Naive thymus-derived CD4-positive, alpha-beta T cell (primary cell): ENCODE measurements at regions of chr22 and their contacts with region 1.

Region 1: GRCh38 chr22:31107178-31107893 is at the start of gene SELENOM:
- DNase-seq: peak; percentile 73 to 89 (median 84)
- ATAC-seq: peak; percentile 98
- H3K4me3 ChIP-seq: peak within 1 kb of the TSS; percentile 94
- H3K4me3 Mint-ChIP-seq: peak within 1 kb of the TSS; percentile 88 to 98 (median 93)
- H3K27ac ChIP-seq: peak within 1 kb of the TSS; percentile 86
- H3K27ac Mint-ChIP-seq: peak within 1 kb of the TSS; percentile 81 to 96 (median 90)
- H3K4me1 ChIP-seq: peaks cover 8 to 16% of the 10 kb centered on the region in 2 donors
- H3K4me1 Mint-ChIP-seq: peaks cover 12 to 26% (median 20%) of the 10 kb centered on the region in 7 donors
- H3K27me3 ChIP-seq: no peaks in the 10 kb centered on the region
- H3K27me3 Mint-ChIP-seq: peaks cover 0 to 3% (median 0%) of the 10 kb centered on the region in 5 donors
- total RNA-seq, gene SELENOM: 9.1 to 71.5 (median 68.6) TPM

Region 2: DNA sequence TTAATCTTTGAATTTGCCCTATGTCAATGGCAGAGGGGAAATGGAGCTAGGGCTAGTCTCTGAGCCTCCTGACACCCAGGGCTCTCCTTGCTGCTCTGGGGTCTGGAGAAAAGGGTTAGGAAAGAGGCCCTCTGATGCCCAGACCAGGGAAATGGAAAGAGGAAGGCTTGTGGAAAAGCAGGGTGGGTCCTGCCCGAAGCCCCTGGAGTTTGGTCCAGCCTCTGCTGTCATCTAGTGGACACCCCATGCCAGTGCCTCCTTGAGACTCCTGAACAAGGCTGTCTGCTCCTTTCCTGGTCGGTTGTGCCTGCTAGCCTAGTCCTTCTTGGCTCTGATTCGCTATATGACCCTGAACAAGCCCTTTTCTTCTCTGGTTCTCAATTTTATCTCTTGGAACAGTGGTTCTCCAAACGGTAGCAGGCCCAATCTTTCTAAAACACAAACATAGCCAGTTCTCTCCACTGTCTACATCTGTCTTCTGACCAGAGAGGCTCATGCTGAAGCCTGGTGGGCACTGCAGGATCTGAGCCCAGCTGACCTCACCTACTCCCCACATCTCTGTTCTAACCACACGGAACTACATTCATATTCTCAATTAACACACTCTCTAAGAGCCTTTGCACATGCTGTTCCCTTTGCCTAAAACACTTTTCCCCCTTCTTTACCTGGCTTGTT is 41.8 kb after region 1 on chr22:
- CTCF ChIA-PET with region 1: no interaction called
- POLR2A ChIA-PET with region 1: no interaction called
- intact Hi-C with region 1: loop called in 1 of 2 experiments (anchors 5 kb)
- DNase-seq: peak in 6 of 9 donors; percentile 4 to 30 (median 20)
- ATAC-seq: peak; percentile 61
- H3K4me3 ChIP-seq: no peak overlapping the region
- H3K4me3 Mint-ChIP-seq: no peak overlapping the region
- H3K27ac ChIP-seq: no peak overlapping the region
- H3K27ac Mint-ChIP-seq: no peak overlapping the region
- H3K4me1 ChIP-seq: no peaks in the 10 kb centered on the region
- H3K4me1 Mint-ChIP-seq: peaks cover 0 to 7% (median 0%) of the 10 kb centered on the region in 7 donors
- H3K27me3 ChIP-seq: no peaks in the 10 kb centered on the region
- H3K27me3 Mint-ChIP-seq: peaks cover 0 to 13% (median 4%) of the 10 kb centered on the region in 5 donors

Region 3: DNA sequence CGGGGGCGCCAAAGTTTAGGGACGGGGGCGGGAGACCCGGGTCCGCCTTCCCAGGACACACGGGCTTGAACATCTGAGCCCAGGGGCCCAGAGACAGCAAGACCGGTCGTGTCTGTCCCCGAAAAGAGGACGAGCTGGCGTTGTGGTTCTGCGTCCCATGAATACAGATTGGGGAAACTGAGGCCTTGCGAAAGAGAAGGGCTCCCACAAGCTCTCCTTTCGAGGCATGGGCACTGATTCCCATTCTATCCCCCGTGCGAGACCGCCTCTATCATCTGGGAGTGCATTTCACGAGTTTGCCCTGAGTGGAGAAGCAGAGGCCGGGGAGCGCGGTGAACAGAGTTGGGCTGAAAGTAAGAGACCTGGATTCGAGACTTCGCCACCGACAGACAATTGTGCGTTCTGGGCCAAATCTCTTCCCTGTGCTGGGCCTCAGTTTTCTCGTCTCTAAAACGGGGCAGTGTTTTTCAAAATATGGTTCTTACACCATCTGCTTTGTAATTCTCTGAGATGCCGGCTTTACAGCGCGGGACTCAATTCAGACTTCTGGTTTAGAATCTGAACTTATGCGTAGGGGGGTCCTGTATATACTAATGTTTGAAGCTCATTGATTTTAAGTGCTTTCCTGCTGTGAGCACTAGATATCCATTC is 53.1 kb after region 1 on chr22:
- CTCF ChIA-PET with region 1: no interaction called
- POLR2A ChIA-PET with region 1: no interaction called
- intact Hi-C with region 1: loop called (anchors 1 to 5 kb)
- DNase-seq: peak in 3 of 9 donors; percentile 5 to 26 (median 9)
- ATAC-seq: peak; percentile 47
- H3K4me3 ChIP-seq: peak overlapping the region; percentile 76
- H3K4me3 Mint-ChIP-seq: peak overlapping the region; percentile 87 to 100 (median 99)
- H3K27ac ChIP-seq: peak overlapping the region; percentile 74
- H3K27ac Mint-ChIP-seq: peak overlapping the region; percentile 91 to 100 (median 97)
- H3K4me1 ChIP-seq: peaks cover 12 to 17% of the 10 kb centered on the region in 2 donors
- H3K4me1 Mint-ChIP-seq: peaks cover 25 to 42% (median 35%) of the 10 kb centered on the region in 7 donors
- H3K27me3 ChIP-seq: no peaks in the 10 kb centered on the region
- H3K27me3 Mint-ChIP-seq: peaks cover 0 to 13% (median 0%) of the 10 kb centered on the region in 5 donors

Region 4: GRCh38 chr22:31272522-31273446 is 165.4 kb after region 1 on chr22:
- CTCF ChIA-PET with region 1: interaction called, 4 read pairs
- POLR2A ChIA-PET with region 1: interaction called, 6 read pairs
- intact Hi-C with region 1: loop called in 1 of 2 experiments (anchors 1 kb)
- DNase-seq: peak in 5 of 9 donors; percentile 38 to 58 (median 50)
- ATAC-seq: peak; percentile 81
- H3K4me3 ChIP-seq: no peak overlapping the region
- H3K4me3 Mint-ChIP-seq: peak overlapping the region in 4 of 10 donors; percentile 18 to 50 (median 28)
- H3K27ac ChIP-seq: peak overlapping the region; percentile 51
- H3K27ac Mint-ChIP-seq: peak overlapping the region; percentile 46 to 95 (median 86)
- H3K4me1 ChIP-seq: peaks cover 2 to 63% of the 10 kb centered on the region in 2 donors
- H3K4me1 Mint-ChIP-seq: peaks cover 25 to 91% (median 77%) of the 10 kb centered on the region in 7 donors
- H3K27me3 ChIP-seq: no peaks in the 10 kb centered on the region
- H3K27me3 Mint-ChIP-seq: no peaks in the 10 kb centered on the region

Region 5: GRCh38 chr22:31313366-31314147 is 206.2 kb after region 1 on chr22:
- CTCF ChIA-PET with region 1: no interaction called
- POLR2A ChIA-PET with region 1: no interaction called
- intact Hi-C with region 1: loop called in 1 of 2 experiments (anchors 5 kb)
- DNase-seq: peak; percentile 40 to 71 (median 62)
- ATAC-seq: peak; percentile 76
- H3K4me3 ChIP-seq: no peak overlapping the region
- H3K4me3 Mint-ChIP-seq: peak overlapping the region in 3 of 10 donors; percentile 2 to 10 (median 9)
- H3K27ac ChIP-seq: peak overlapping the region; percentile 32
- H3K27ac Mint-ChIP-seq: peak overlapping the region; percentile 16 to 84 (median 45)
- H3K4me1 ChIP-seq: peaks cover 2 to 10% of the 10 kb centered on the region in 2 donors
- H3K4me1 Mint-ChIP-seq: peaks cover 9 to 33% (median 26%) of the 10 kb centered on the region in 7 donors
- H3K27me3 ChIP-seq: no peaks in the 10 kb centered on the region
- H3K27me3 Mint-ChIP-seq: no peaks in the 10 kb centered on the region

Region 6: DNA sequence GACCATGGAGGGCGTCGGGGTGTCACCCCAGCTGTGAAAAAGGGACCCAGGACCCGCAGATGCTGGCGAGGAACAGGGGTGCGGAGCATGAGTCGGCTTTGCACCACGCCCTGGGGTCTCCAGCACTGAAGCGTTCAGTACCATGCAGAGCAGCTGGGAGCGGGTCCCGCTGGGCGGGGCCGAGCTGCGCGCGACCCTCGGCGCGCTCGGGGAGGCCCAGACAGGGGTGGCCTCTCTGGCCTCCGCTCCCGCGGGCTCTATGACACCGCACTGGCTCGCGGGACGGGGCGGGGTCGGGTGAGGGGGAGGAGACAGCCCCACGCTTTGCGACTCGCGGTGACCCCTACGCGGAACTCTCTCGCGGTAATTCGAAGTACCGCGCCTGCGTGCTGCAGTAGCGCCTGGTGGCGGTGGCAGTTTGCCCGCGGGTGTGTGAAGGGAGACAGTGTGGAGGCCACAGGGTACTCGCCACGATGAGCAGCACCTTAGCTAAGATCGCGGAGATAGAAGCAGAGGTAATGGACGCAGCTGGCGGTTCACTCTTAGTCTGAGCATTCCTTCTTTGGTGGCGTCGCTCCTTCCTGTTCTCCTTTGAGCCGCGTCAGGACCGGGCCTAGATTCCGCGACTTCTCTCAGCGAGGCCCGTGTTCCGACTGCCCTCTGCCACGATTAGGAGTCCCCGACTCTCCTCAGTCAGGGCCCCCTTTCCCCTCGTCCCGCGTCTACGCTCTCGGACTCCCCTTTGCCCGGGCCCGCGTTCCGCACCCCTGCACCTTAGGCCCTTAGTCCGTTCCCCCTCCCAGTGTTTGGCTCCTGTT is 292.1 kb after region 1 on chr22 and contains the start of gene DRG1:
- CTCF ChIA-PET with region 1: no interaction called
- POLR2A ChIA-PET with region 1: no interaction called
- intact Hi-C with region 1: loop called in 1 of 2 experiments (anchors 2 kb)
- DNase-seq: peak; percentile 90 to 98 (median 93)
- ATAC-seq: peak; percentile 99
- H3K4me3 ChIP-seq: peak within 1 kb of the TSS; percentile 88
- H3K4me3 Mint-ChIP-seq: peak within 1 kb of the TSS; percentile 92 to 99 (median 96)
- H3K27ac ChIP-seq: peak within 1 kb of the TSS; percentile 91
- H3K27ac Mint-ChIP-seq: peak within 1 kb of the TSS; percentile 85 to 97 (median 94)
- H3K4me1 ChIP-seq: peaks cover 10 to 15% of the 10 kb centered on the region in 2 donors
- H3K4me1 Mint-ChIP-seq: peaks cover 5 to 35% (median 22%) of the 10 kb centered on the region in 7 donors
- H3K27me3 ChIP-seq: no peaks in the 10 kb centered on the region
- H3K27me3 Mint-ChIP-seq: no peaks in the 10 kb centered on the region
- total RNA-seq, gene DRG1: 53.3 to 109 (median 84.4) TPM

Region 7: GRCh38 chr22:31489604-31490495 is 382.5 kb after region 1 on chr22 and contains the start of gene EIF4ENIF1:
- CTCF ChIA-PET with region 1: no interaction called
- POLR2A ChIA-PET with region 1: no interaction called
- intact Hi-C with region 1: loop called in 1 of 2 experiments (anchors 1 kb)
- DNase-seq: peak; percentile 81 to 91 (median 87)
- ATAC-seq: peak; percentile 89
- H3K4me3 ChIP-seq: peak within 1 kb of the TSS; percentile 66
- H3K4me3 Mint-ChIP-seq: peak within 1 kb of the TSS; percentile 87 to 98 (median 94)
- H3K27ac ChIP-seq: peak within 1 kb of the TSS; percentile 92
- H3K27ac Mint-ChIP-seq: peak within 1 kb of the TSS; percentile 93 to 99 (median 96)
- H3K4me1 ChIP-seq: peaks cover 19 to 25% of the 10 kb centered on the region in 2 donors
- H3K4me1 Mint-ChIP-seq: peaks cover 7 to 54% (median 47%) of the 10 kb centered on the region in 7 donors
- H3K27me3 ChIP-seq: no peaks in the 10 kb centered on the region
- H3K27me3 Mint-ChIP-seq: no peaks in the 10 kb centered on the region
- total RNA-seq, gene EIF4ENIF1: 26.3 to 46.5 (median 36.8) TPM